ENCODE measurements at regions of chr16 and their contacts with region 1.

Region 1: DNA sequence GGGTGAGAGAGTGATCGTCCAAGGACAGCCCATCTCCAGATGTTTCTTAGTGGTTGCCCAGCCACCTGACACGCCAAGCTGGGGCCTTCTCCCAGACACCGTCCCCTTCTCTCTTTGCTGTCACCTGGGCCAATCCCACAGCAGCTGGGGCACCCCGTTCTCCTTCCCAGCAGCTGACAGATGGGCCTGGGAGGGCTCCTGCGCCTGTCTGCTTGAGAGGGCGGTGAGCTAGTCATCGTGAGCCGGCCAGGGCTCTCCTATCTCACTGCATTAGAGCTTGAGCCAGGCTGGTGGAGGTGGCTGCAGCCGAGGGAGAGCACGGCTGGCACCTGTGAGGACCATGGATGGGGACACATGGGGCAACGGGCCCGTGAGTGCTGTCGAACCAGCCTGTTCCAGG is 41.2 kb downstream of the RAB11FIP3 start:
- DNase-seq: no peak
- ATAC-seq: no peak
- H3K4me3 ChIP-seq: no peak overlapping the region
- H3K27ac ChIP-seq: no peak overlapping the region
- H3K4me1 ChIP-seq: no peaks in the 10 kb centered on the region
- H3K27me3 ChIP-seq: no peaks in the 10 kb centered on the region
- CTCF ChIP-seq: no peak

Region 2: GRCh38 chr16:450385-451134 is 16.1 kb before region 1 on chr16:
- CTCF ChIA-PET with region 1: interaction called, 11 read pairs
- POLR2A ChIA-PET with region 1: no interaction called
- in situ Hi-C with region 1: no loop called
- intact Hi-C with region 1: no loop called
- DNase-seq: no peak
- ATAC-seq: no peak
- H3K4me3 ChIP-seq: no peak overlapping the region
- H3K27ac ChIP-seq: no peak overlapping the region
- H3K4me1 ChIP-seq: peaks cover 7% of the 10 kb centered on the region; the same call in 1 of the 2 replicates
- H3K27me3 ChIP-seq: no peaks in the 10 kb centered on the region
- CTCF ChIP-seq: no peak

Region 3: GRCh38 chr16:483341-484075 is 16.9 kb after region 1 on chr16:
- CTCF ChIA-PET with region 1: no interaction called
- POLR2A ChIA-PET with region 1: no interaction called
- in situ Hi-C with region 1: no loop called
- intact Hi-C with region 1: no loop called
- DNase-seq: no peak
- ATAC-seq: no peak
- H3K4me3 ChIP-seq: no peak overlapping the region
- H3K27ac ChIP-seq: no peak overlapping the region
- H3K4me1 ChIP-seq: no peaks in the 10 kb centered on the region
- H3K27me3 ChIP-seq: no peaks in the 10 kb centered on the region
- CTCF ChIP-seq: no peak